PC-3 (cell line): ENCODE measurements at regions of chr18 and their contacts with region 1.

Region 1: DNA sequence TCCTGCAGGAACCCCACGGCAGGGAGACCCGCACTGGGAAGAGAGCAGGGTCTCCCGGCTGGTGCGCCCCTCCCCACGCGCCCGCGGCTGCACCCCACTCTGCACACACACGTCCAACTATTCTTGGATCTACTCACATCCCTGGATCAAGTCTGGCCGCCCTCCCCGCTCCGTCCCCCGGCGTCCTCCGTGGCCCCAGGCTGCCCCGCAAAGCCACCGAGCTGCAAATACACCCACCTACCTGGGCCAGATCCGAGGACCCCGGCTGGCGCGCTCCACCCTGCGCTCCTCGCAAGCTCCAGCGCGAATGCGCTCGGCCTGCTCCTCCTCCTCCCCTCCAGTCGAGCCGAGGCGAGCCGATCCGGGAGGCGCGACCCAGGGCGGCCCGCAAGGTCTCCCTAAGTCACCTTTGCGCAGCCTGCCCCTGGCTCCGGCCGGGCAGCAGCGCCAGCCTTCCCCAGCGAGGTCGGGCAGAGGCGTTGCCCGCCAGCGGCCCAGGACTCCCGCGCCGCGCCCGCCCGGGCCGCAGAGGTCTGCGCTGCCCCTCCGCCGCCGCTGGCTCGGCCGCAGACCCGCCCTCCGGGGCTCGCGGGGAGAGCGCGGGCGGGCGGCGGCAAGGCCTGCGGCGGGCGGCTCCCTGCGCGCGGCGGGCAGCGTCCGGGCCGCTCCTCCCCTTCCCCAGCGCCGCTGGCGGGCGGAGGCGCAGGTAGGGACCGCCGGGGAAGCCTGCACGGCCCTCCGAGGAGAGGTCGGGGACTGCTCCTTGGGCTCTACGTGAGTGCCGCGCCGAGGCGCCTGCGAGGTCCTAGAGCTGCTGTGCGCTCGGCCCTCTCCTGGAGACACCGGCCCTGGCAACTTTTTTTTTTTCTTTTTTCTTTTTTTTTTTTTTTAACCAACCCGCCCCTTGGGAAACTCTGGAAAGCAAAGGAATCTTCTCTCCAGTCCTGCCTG is 126.0 kb downstream of the OSBPL1A start:
- DNase-seq: peak; percentile 72
- ATAC-seq: peak; percentile 66
- H3K4me3 ChIP-seq: peak overlapping the region; percentile 94
- H3K27ac ChIP-seq: peak overlapping the region; percentile 71
- H3K4me1 ChIP-seq: peaks cover 52% of the 10 kb centered on the region
- H3K27me3 ChIP-seq: no peaks in the 10 kb centered on the region
- CTCF ChIP-seq: no peak

Region 2: DNA sequence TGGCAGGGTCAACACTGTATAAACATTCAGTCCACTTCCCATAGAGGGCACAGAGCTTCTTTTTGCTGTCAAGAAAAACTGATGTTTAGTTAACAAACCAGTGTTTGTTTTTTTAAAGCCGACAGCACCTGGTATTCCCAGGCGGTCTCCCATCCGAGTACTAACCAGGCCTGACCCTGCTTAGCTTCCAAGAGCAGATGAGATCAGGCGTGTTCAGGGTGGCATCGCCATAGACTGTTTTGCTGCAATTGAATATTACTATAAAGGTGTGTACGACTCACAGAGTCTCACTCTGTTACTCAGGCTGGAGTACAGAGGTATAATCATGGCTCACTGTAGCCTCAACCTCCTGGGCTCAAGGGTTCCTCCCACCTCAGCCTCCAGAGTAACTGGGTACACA is 101.3 kb before region 1 on chr18:
- CTCF ChIA-PET with region 1: no interaction called
- POLR2A ChIA-PET with region 1: no interaction called
- intact Hi-C with region 1: loop called (anchors 1 kb)
- DNase-seq: no peak
- ATAC-seq: no peak
- H3K4me3 ChIP-seq: no peak overlapping the region
- H3K27ac ChIP-seq: no peak overlapping the region
- H3K4me1 ChIP-seq: peaks cover 13% of the 10 kb centered on the region
- H3K27me3 ChIP-seq: no peaks in the 10 kb centered on the region
- CTCF ChIP-seq: no peak

Region 3: GRCh38 chr18:24212939-24213338 is 58.7 kb before region 1 on chr18:
- CTCF ChIA-PET with region 1: no interaction called
- POLR2A ChIA-PET with region 1: no interaction called
- intact Hi-C with region 1: loop called (anchors 1 kb)
- DNase-seq: peak; percentile 97
- ATAC-seq: peak; percentile 87
- H3K4me3 ChIP-seq: no peak overlapping the region
- H3K27ac ChIP-seq: peak overlapping the region; percentile 30
- H3K4me1 ChIP-seq: peaks cover 78% of the 10 kb centered on the region
- H3K27me3 ChIP-seq: no peaks in the 10 kb centered on the region
- CTCF ChIP-seq: no peak

Region 4: GRCh38 chr18:24231773-24232735 is 39.6 kb before region 1 on chr18:
- CTCF ChIA-PET with region 1: interaction called, 4 read pairs
- POLR2A ChIA-PET with region 1: no interaction called
- intact Hi-C with region 1: loop called (anchors 1 kb)
- DNase-seq: peak; percentile 86
- ATAC-seq: peak; percentile 74
- H3K4me3 ChIP-seq: peak overlapping the region; percentile 6; the same call in 1 of the 2 replicates
- H3K27ac ChIP-seq: peak overlapping the region; percentile 84
- H3K4me1 ChIP-seq: peaks cover 53% of the 10 kb centered on the region
- H3K27me3 ChIP-seq: no peaks in the 10 kb centered on the region
- CTCF ChIP-seq: no peak

Region 5: GRCh38 chr18:24354286-24354685 is 82.6 kb after region 1 on chr18:
- CTCF ChIA-PET with region 1: interaction called, 3 read pairs
- POLR2A ChIA-PET with region 1: no interaction called
- intact Hi-C with region 1: loop called (anchors 10 kb)
- DNase-seq: no peak
- ATAC-seq: no peak
- H3K4me3 ChIP-seq: no peak overlapping the region
- H3K27ac ChIP-seq: no peak overlapping the region
- H3K4me1 ChIP-seq: no peaks in the 10 kb centered on the region
- H3K27me3 ChIP-seq: no peaks in the 10 kb centered on the region
- CTCF ChIP-seq: no peak